Left cardiac atrium (tissue), 4 donors: ENCODE measurements at regions of chr11 and their contacts with region 1.

Region 1: DNA sequence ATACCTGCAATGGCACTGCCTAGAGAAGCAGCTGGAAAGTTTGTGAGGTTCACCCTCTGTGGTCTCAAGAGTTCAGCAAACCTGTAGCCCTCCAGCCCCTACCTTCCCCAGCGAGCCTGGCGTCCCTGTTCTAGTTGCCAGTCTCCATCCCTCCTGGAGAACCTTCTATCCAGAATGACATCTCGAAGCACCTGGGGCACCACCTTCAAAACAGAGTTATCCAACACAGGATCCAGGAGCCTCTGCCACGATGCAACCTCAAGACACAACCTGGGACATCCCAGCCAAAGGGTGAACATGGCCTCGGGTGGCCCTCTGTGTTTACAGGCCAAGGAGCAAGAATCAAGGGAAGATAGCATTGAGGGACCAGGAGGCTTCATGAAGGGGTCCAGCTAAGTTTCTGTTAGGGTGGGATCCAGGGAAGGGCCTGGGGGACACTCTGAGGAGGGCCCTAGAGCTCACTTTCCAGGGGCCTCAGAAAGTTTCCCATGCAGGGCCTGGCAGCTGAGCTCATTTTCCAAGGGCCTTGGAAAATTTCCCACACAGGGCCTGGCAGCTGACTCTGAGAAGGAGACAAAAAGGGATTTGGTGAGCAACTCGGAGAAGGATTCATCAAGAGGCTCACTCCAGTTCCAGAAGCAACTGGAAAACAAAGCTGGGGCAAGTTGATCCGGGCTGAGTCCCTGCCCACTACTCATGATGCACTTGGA is 36.9 kb upstream of the SYT13 start:
- DNase-seq: no peak
- ATAC-seq: no peak

Region 2: DNA sequence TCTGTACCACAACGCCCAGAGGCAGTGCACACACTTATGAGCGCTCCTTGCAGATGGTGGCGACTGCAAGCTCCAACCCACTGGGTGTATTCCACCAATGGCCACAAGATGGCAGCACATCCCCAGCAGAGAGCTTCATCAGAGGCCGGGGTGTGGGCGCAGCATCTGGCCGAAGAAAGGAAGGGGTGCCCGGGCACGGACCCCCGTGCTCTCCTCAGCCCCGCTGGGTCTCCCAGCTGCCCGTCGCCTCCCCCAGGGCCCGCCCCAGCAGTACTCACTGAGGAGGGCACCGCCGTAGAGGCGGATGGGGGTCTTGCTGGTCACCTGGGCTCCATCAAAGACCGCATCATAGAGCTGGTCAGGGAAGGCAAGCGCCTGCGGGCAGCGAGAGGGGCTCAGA is 386.5 kb before region 1 on chr11:
- intact Hi-C with region 1: loop called in 1 of 2 experiments (anchors 10 kb)
- DNase-seq: peak; percentile 84
- ATAC-seq: peak; percentile 42 to 50

Region 3: DNA sequence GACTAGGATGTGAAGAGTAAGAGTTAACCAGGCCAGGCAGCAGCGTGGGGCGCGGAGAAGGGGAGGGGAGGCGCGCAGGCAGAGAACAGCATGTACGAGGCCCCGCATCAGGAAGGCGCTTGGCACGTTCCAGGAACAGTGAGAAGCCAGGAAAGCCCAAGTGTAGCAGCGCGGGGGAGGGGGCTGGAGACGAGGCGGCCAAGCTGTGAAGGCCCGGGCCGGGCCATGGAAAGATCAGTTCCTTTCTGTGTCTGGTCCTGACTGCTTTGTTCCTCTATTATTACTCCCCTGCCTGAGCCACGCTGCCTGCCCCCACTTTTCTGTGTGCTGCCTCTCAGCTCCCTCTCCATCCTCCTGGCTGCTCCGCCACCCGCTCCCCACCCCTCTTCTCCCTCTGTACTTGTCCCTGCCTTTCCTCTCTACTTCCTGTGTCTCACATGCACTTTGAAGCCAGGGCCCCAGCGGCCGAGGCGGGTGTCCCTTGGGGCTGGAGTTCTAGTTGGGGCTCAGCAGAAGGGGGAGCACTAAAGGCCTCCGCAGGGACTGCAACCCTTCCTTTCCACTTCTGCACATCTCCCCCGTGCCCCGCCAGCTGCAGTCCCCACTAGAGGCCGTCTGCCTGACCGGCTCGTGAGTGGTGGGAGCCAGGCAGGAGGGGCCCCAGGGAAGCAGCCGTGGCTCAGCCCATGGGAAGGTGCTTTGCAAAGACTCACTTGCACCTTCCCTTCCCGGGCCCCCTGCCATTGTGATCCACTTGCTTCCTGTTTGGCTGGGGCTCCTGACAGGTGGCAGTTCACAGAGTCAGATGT is 113.0 kb before region 1 on chr11:
- intact Hi-C with region 1: loop called in 1 of 2 experiments (anchors 10 kb)
- DNase-seq: peak; percentile 94
- ATAC-seq: peak; percentile 94 to 95

Region 4: GRCh38 chr11:45267052-45267451 is 56.0 kb before region 1 on chr11:
- intact Hi-C with region 1: no loop called
- DNase-seq: no peak
- ATAC-seq: no peak